ENCODE measurements at regions of chr12 and their contacts with region 1.

Region 1: GRCh38 chr12:2673966-2674810 is 120.6 kb upstream of the FKBP4 start:
- DNase-seq: no peak
- H3K4me3 ChIP-seq: no peak overlapping the region
- H3K27ac ChIP-seq: no peak overlapping the region
- H3K4me1 ChIP-seq: no peaks in the 10 kb centered on the region
- H3K27me3 ChIP-seq: peaks cover 100% of the 10 kb centered on the region
- CTCF ChIP-seq: no peak

Region 2: GRCh38 chr12:2160057-2160456 is 514.1 kb before region 1 on chr12:
- CTCF ChIA-PET with region 1: interaction called, 10 read pairs
- POLR2A ChIA-PET with region 1: no interaction called
- intact Hi-C with region 1: no loop called
- DNase-seq: no peak
- H3K4me3 ChIP-seq: no peak overlapping the region
- H3K27ac ChIP-seq: no peak overlapping the region
- H3K4me1 ChIP-seq: no peaks in the 10 kb centered on the region
- H3K27me3 ChIP-seq: peaks cover 98% of the 10 kb centered on the region
- CTCF ChIP-seq: no peak

Region 3: DNA sequence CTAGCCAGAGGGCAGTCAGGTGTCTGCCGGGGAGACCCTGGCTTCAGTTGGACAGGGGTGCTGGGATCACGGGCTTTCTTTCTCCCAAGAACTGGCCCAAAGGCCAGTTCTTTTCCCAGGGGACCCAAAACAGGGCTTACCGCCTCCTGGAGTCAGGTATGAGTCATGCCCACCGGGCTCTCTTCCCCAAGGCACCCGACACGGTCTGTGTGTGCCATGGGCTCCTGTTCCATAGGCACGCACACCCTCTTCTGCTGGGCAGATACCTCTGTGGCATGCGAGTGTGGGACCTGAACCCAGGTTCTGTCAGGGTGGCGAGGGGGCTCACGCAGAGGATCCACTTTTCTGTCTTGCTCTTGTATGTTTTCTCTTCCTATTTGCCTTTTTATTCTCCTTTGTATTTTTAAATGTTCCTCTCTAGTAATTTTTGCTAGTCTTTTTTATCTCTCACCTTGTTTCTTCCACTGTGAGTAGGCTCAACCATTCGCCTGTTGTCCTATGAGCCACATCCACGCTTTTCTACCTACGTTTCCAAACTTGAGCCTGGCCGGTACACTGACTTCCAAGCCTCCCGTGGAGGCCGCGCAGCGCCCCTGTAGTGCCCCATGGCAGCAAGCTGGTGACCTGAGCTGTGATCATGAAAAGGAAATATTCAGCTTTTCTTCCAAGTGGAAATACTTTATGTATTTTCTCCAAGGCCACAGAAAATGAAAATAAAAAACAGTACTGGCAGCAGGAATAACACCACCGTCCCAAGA is 259.2 kb before region 1 on chr12:
- CTCF ChIA-PET with region 1: no interaction called
- POLR2A ChIA-PET with region 1: no interaction called
- intact Hi-C with region 1: no loop called
- DNase-seq: no peak
- H3K4me3 ChIP-seq: no peak overlapping the region
- H3K27ac ChIP-seq: no peak overlapping the region
- H3K4me1 ChIP-seq: no peaks in the 10 kb centered on the region
- H3K27me3 ChIP-seq: peaks cover 99% of the 10 kb centered on the region
- CTCF ChIP-seq: no peak